Spleen (tissue), 13 donors: ENCODE measurements at regions of chr19 and their contacts with region 1.

Region 1: DNA sequence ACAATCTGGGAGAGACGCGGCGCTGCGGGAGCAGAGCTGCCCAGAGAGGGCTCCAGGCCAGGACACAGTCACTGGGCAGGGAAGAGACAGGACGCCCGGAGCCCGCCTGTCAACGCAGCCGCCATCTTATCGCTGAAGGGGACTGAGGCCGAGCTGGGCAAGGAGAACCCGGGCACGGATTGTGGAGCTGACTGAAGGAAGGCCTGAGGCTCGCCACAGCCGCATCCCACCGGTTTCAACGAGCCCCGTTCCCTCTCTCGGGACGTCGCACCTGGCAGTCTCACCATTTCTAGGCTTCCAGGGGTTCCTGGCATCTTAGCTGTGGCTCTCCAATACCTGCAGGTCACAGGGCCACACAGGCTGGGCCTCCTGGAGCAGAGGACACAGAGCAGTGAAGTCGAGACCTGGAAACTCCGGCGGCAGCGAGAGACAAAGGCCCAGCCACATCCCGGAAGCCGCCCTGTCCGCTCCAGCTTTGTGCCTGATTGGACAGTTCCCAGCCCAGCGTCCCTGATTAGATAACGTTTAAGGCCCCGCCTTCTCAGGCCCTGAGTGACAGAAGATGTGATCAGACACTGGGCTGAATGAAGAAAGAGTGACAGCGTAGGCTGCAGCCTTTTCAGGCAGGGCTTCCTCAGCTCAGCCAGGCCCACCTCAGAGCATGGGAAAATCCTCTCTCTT is at the start of gene ZNF91:
- DNase-seq: peak; percentile 97
- H3K4me3 ChIP-seq: peak within 1 kb of the TSS; percentile 68 to 94 (median 76)
- H3K27ac ChIP-seq: peak within 1 kb of the TSS; percentile 81 to 94 (median 90)
- H3K4me1 ChIP-seq: peaks cover 12 to 52% (median 41%) of the 10 kb centered on the region in 6 donors
- H3K27me3 ChIP-seq: no peaks in the 10 kb centered on the region
- CTCF ChIP-seq: no peak
- POLR2A ChIP-seq: peak in 2 of 3 donors; percentile 75 to 83
- total RNA-seq, gene ZNF91: 51.7 to 99.4 (median 64.6) TPM

Region 2: GRCh38 chr19:23273590-23274413 is 121.4 kb before region 1 on chr19:
- intact Hi-C with region 1: loop called (anchors 10 kb)
- DNase-seq: peak; percentile 95
- H3K4me3 ChIP-seq: peak overlapping the region; percentile 66 to 98 (median 81)
- H3K27ac ChIP-seq: peak overlapping the region; percentile 75 to 93 (median 88)
- H3K4me1 ChIP-seq: peaks cover 6 to 32% (median 20%) of the 10 kb centered on the region in 6 donors
- H3K27me3 ChIP-seq: no peaks in the 10 kb centered on the region
- CTCF ChIP-seq: no peak
- POLR2A ChIP-seq: peak; percentile 8 to 72 (median 13)